Endothelial cell of umbilical vein (primary cell): ENCODE measurements at regions of chr22 and their contacts with region 1.

Region 1: GRCh38 chr22:42437488-42438292 is 5.5 kb upstream of the NFAM1 start:
- DNase-seq: peak; percentile 28
- H3K4me3 ChIP-seq: no peak overlapping the region
- H3K27ac ChIP-seq: no peak overlapping the region
- H3K4me1 ChIP-seq: peaks cover 9% of the 10 kb centered on the region
- H3K27me3 ChIP-seq: peaks cover 9 to 12% of the 10 kb centered on the region in 2 experiments
- CTCF ChIP-seq: peak; percentile 87 to 93
- POLR2A ChIP-seq: no peak

Region 2: GRCh38 chr22:41966607-41967240 is 471.0 kb before region 1 on chr22:
- CTCF ChIA-PET with region 1: interaction called, 3 read pairs
- POLR2A ChIA-PET with region 1: no interaction called
- dilution Hi-C with region 1: no loop called
- intact Hi-C with region 1: loop called (anchors 1 kb)
- DNase-seq: peak; percentile 72
- H3K4me3 ChIP-seq: no peak overlapping the region
- H3K27ac ChIP-seq: no peak overlapping the region
- H3K4me1 ChIP-seq: peaks cover 4% of the 10 kb centered on the region
- H3K27me3 ChIP-seq: no peaks in the 10 kb centered on the region
- CTCF ChIP-seq: peak; percentile 34 to 48
- POLR2A ChIP-seq: no peak

Region 3: GRCh38 chr22:42090596-42091454 is 346.9 kb before region 1 on chr22 and contains the start of gene NDUFA6:
- CTCF ChIA-PET with region 1: interaction called, 34 read pairs
- POLR2A ChIA-PET with region 1: no interaction called
- dilution Hi-C with region 1: no loop called
- intact Hi-C with region 1: loop called (anchors 1 kb)
- DNase-seq: peak; percentile 100
- H3K4me3 ChIP-seq: peak within 1 kb of the TSS; percentile 51 to 77 (median 72)
- H3K27ac ChIP-seq: peak within 1 kb of the TSS; percentile 69
- H3K4me1 ChIP-seq: peaks cover 8% of the 10 kb centered on the region
- H3K27me3 ChIP-seq: no peaks in the 10 kb centered on the region
- CTCF ChIP-seq: peak; percentile 91 to 97
- POLR2A ChIP-seq: peak; percentile 88
- total RNA-seq, gene NDUFA6: 84.9 and 95.7 TPM in 2 replicates

Region 4: DNA sequence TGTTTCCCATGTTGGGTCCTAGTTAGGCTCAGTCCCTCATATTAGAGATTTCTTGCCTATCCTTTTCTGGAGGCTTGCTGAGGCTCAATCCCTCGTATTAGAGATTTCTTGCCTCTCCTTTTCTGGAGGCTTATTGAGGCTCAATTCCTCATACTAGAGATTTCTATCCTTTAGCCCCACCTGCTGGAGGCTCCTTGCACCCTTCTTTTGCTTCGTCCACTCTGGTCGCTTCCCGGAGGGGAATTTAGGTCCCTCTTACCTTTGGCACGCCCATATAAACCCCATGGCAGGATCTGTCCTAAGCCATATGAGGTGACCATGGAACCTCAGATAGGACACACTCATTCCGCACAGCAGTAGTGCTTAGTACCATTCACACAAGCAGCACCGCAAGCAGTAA is 323.0 kb before region 1 on chr22:
- CTCF ChIA-PET with region 1: interaction called, 3 read pairs
- POLR2A ChIA-PET with region 1: no interaction called
- dilution Hi-C with region 1: no loop called
- intact Hi-C with region 1: loop called (anchors 2 kb)
- DNase-seq: peak; percentile 41
- H3K4me3 ChIP-seq: no peak overlapping the region
- H3K27ac ChIP-seq: no peak overlapping the region
- H3K4me1 ChIP-seq: no peaks in the 10 kb centered on the region
- H3K27me3 ChIP-seq: no peaks in the 10 kb centered on the region
- CTCF ChIP-seq: peak; percentile 32 to 56
- POLR2A ChIP-seq: no peak

Region 5: DNA sequence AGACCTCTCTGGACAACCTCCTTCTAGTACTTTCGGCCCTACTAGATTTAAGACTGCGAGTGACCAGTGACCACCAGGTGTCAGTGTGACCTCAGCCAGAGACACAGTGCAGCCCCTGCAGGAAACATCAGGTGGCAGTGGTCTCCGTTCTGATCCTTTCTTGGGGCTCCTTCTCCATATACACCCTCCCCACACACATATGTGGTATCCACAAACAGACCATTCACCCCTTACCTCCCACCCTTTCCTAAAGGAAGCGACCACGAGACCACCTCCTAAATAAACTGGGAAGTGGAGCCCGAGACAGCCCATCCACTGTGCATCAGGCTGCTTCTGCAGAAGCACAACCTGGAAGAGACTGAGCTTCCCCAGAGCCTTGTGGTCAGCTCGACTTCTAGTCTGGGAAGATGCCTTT is 268.6 kb before region 1 on chr22:
- CTCF ChIA-PET with region 1: interaction called, 13 read pairs
- POLR2A ChIA-PET with region 1: no interaction called
- dilution Hi-C with region 1: no loop called
- intact Hi-C with region 1: no loop called
- DNase-seq: peak; percentile 81
- H3K4me3 ChIP-seq: no peak overlapping the region
- H3K27ac ChIP-seq: no peak overlapping the region
- H3K4me1 ChIP-seq: peaks cover 11% of the 10 kb centered on the region
- H3K27me3 ChIP-seq: no peaks in the 10 kb centered on the region
- CTCF ChIP-seq: peak; percentile 91 to 97
- POLR2A ChIP-seq: no peak

Region 6: GRCh38 chr22:42270512-42271417 is 166.9 kb before region 1 on chr22 and contains the start of gene TCF20:
- CTCF ChIA-PET with region 1: no interaction called
- POLR2A ChIA-PET with region 1: no interaction called
- dilution Hi-C with region 1: no loop called
- intact Hi-C with region 1: loop called (anchors 10 kb)
- DNase-seq: peak; percentile 56
- H3K4me3 ChIP-seq: peak within 1 kb of the TSS; percentile 61 to 99 (median 74)
- H3K27ac ChIP-seq: peak within 1 kb of the TSS; percentile 48
- H3K4me1 ChIP-seq: peaks cover 7% of the 10 kb centered on the region
- H3K27me3 ChIP-seq: no peaks in the 10 kb centered on the region
- CTCF ChIP-seq: no peak
- POLR2A ChIP-seq: no peak
- total RNA-seq, gene TCF20: 36.7 and 38.3 TPM in 2 replicates

Region 7: GRCh38 chr22:42369245-42370041 is 68.2 kb before region 1 on chr22:
- CTCF ChIA-PET with region 1: interaction called, 6 read pairs
- POLR2A ChIA-PET with region 1: no interaction called
- dilution Hi-C with region 1: no loop called
- intact Hi-C with region 1: loop called (anchors 2 kb)
- DNase-seq: peak; percentile 75
- H3K4me3 ChIP-seq: peak overlapping the region; percentile 24 to 69 (median 28)
- H3K27ac ChIP-seq: no peak overlapping the region
- H3K4me1 ChIP-seq: peaks cover 16% of the 10 kb centered on the region
- H3K27me3 ChIP-seq: peaks cover 39 to 40% of the 10 kb centered on the region in 2 experiments
- CTCF ChIP-seq: no peak
- POLR2A ChIP-seq: no peak